ENCODE measurements at regions of chr11 and their contacts with region 1.

Region 1: DNA sequence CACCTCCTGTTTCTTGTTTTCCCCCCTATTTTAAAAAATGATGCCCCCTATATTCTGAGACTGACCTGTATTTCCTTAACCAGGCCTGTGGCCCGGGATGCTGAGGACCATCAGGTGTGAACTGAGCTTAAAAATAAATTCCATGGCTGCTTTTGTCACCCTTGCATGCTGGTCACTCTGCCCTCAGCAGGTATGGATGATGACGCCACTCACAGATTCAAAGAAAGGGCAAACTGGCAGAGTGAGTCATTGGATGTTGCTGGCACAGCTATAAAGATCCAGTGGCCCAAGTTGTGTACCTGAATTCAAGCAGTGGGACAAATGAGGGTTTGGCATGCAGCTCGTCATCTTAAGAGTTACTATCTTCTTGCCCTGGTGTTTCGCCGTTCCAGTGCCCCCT is 6.8 kb upstream of the OR51L1 start:
- DNase-seq: no peak
- ATAC-seq: no peak
- H3K4me3 ChIP-seq: no peak overlapping the region
- H3K27ac ChIP-seq: no peak overlapping the region
- H3K4me1 ChIP-seq: no peaks in the 10 kb centered on the region
- H3K27me3 ChIP-seq: no peaks in the 10 kb centered on the region
- CTCF ChIP-seq: no peak
- POLR2A ChIP-seq: no peak

Region 2: DNA sequence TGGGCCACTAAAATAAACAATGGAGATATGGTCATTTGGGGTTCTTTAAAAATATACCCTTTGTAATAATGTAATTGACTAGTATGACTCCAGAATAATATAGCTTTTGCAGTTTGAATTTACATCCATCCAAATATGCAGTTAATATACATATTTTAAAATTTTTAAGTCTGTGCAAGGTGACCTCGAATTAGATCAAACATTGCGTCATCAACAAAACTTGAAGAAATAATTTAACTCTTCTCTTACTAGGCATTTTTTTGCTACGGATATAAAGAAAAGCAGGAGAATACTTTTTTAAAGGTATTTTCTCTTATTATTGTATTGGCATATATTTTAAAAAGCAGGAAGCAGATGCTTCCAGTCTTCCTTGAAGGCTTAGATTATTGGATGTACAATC is 51.1 kb before region 1 on chr11:
- intact Hi-C with region 1: loop called in 1 of 10 experiments (anchors 5 kb)
- DNase-seq: no peak
- ATAC-seq: no peak
- H3K4me3 ChIP-seq: no peak overlapping the region
- H3K27ac ChIP-seq: no peak overlapping the region
- H3K4me1 ChIP-seq: no peaks in the 10 kb centered on the region
- H3K27me3 ChIP-seq: no peaks in the 10 kb centered on the region
- CTCF ChIP-seq: no peak
- POLR2A ChIP-seq: no peak

Region 3: GRCh38 chr11:5065027-5065426 is 77.1 kb after region 1 on chr11:
- intact Hi-C with region 1: no loop called
- DNase-seq: no peak
- ATAC-seq: no peak
- H3K4me3 ChIP-seq: no peak overlapping the region
- H3K27ac ChIP-seq: no peak overlapping the region
- H3K4me1 ChIP-seq: no peaks in the 10 kb centered on the region
- H3K27me3 ChIP-seq: no peaks in the 10 kb centered on the region
- CTCF ChIP-seq: no peak
- POLR2A ChIP-seq: no peak

Measured in heart left ventricle (tissue), 16 donors.